Activated CD4-positive, alpha-beta memory T cell treated with anti-CD3 and anti-CD28 coated beads, Interleukin-2, amount 10 ng/mL, durations not matched to agents 7 days and 5 days (primary cell): ENCODE measurements at regions of chr2 and their contacts with region 1.

Region 1: DNA sequence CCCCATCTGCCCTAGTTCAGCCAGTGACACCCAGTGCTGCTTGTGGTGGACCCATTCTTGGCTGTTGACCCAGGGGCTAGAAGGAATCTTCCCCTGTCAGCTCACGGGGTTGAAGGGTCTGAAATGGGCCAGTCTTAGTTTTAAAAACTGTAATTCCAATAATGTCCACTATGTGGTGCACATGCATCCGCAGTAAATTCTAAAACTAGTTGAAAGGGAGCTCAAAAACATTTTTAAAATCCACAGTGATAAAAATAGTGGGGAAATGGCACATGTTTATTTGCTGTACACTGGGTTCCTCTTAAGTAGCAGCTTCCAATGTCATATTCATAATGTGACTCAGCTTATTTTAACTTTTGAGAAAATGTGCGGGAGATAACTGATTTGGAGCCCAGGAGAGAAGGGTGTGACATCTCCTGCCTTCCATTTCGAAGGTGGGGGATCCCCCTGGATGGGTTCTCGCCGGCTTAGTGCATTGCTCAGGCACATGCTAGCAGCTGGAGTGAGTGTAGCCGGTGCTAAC is 32.8 kb downstream of the GRHL1 start:
- DNase-seq: no peak
- H3K4me3 Mint-ChIP-seq: no peak overlapping the region
- H3K27ac Mint-ChIP-seq: no peak overlapping the region
- H3K4me1 Mint-ChIP-seq: peaks cover 16% of the 10 kb centered on the region
- H3K27me3 Mint-ChIP-seq: peaks cover 13% of the 10 kb centered on the region

Region 2: DNA sequence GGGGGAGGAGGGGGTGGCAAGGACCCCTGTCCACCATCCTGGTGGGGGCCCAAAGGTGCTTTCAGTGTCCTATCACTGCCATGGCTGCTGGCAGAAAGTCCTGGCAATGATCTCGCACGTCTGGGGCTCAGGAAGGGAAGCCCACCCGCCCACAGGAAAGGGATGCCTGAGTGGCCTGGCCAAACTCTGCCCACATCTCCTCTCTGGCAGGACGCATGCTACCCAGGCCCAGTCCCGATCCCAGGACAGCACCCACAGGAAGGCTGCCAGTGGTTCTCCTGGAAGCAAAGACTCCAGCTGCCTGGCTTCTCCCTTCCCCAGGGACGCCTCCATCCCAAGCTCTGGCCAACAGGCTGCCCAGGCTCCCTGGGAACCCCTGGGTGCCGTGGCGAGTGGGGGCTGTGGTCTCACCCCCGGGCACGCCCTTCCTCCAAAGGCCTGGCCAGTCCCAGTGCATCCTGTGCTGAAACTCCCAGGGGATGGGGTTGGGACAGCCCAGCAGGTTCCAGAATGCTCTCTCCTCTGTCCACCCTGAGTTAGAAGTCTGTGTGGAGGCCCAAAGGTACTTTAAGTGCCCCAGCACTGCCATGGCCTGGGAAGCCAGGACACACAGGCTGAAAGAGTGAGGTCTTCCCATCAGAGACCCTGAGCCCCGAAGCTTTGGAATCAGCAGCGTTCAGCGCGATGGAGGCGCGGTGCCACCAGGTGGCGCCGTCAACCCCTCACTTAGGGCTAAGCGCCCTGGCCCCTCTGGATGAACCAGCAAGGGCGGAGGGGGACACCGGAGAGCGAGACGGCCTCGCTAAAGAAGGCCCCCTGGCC is 170.8 kb before region 1 on chr2:
- CTCF ChIA-PET with region 1: interaction called, 32 read pairs
- POLR2A ChIA-PET with region 1: no interaction called
- DNase-seq: peak; percentile 79
- H3K4me3 Mint-ChIP-seq: no peak overlapping the region
- H3K27ac Mint-ChIP-seq: no peak overlapping the region
- H3K4me1 Mint-ChIP-seq: peaks cover 35% of the 10 kb centered on the region
- H3K27me3 Mint-ChIP-seq: peaks cover 7% of the 10 kb centered on the region

Region 3: GRCh38 chr2:9949584-9950513 is 34.4 kb before region 1 on chr2:
- CTCF ChIA-PET with region 1: interaction called, 25 read pairs
- POLR2A ChIA-PET with region 1: no interaction called
- DNase-seq: no peak
- H3K4me3 Mint-ChIP-seq: peak overlapping the region; percentile 75
- H3K27ac Mint-ChIP-seq: no peak overlapping the region
- H3K4me1 Mint-ChIP-seq: peaks cover 9% of the 10 kb centered on the region
- H3K27me3 Mint-ChIP-seq: peaks cover 61% of the 10 kb centered on the region

Region 4: DNA sequence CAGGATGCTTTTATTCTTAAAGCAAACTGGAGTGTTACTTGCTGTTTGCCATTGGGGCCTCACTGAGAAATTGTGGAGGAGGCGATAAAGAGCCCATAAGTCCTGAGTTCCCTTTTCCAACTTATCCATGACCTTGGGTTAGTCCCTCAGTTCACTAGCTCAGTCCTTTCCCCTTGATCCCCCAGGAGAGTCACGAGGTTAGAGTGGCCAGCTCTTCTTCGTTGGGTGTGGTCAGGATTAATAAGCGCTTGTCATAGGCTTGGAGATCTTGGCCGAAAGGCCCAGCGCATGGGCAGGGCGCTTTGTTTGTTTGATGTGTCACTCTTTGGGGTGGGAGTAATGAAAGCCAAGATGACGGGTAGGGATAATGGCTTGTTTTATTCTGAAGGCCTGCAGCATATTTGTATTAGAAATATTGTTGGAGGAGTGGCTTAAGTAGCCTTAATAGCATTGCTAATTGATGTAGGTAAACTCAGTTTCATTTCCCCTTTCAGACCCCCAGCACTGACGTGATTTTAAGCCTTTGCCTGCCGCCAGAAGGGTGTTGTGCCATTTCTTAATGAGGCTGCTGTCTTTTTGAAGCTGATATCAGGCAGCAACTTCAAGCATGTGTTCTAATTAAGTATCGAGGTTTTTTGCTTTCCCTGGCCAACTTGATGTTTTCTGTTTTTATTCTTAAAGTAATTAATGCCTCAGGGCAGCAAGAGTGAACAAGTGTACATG is 17.1 kb before region 1 on chr2:
- CTCF ChIA-PET with region 1: interaction called, 28 read pairs
- POLR2A ChIA-PET with region 1: interaction called, 3 read pairs
- DNase-seq: no peak
- H3K4me3 Mint-ChIP-seq: no peak overlapping the region
- H3K27ac Mint-ChIP-seq: no peak overlapping the region
- H3K4me1 Mint-ChIP-seq: peaks cover 36% of the 10 kb centered on the region
- H3K27me3 Mint-ChIP-seq: peaks cover 1% of the 10 kb centered on the region

Region 5: GRCh38 chr2:10028988-10029874 is 45.0 kb after region 1 on chr2:
- CTCF ChIA-PET with region 1: interaction called, 52 read pairs
- POLR2A ChIA-PET with region 1: interaction called, 6 read pairs
- DNase-seq: peak; percentile 77
- H3K4me3 Mint-ChIP-seq: peak overlapping the region; percentile 65
- H3K27ac Mint-ChIP-seq: peak overlapping the region; percentile 79
- H3K4me1 Mint-ChIP-seq: peaks cover 38% of the 10 kb centered on the region
- H3K27me3 Mint-ChIP-seq: no peaks in the 10 kb centered on the region

Region 6: GRCh38 chr2:10043906-10044601 is 59.8 kb after region 1 on chr2:
- CTCF ChIA-PET with region 1: interaction called, 157 read pairs
- POLR2A ChIA-PET with region 1: interaction called, 14 read pairs
- DNase-seq: peak; percentile 95
- H3K4me3 Mint-ChIP-seq: peak overlapping the region; percentile 80
- H3K27ac Mint-ChIP-seq: peak overlapping the region; percentile 81
- H3K4me1 Mint-ChIP-seq: peaks cover 44% of the 10 kb centered on the region
- H3K27me3 Mint-ChIP-seq: peaks cover 26% of the 10 kb centered on the region

Region 7: DNA sequence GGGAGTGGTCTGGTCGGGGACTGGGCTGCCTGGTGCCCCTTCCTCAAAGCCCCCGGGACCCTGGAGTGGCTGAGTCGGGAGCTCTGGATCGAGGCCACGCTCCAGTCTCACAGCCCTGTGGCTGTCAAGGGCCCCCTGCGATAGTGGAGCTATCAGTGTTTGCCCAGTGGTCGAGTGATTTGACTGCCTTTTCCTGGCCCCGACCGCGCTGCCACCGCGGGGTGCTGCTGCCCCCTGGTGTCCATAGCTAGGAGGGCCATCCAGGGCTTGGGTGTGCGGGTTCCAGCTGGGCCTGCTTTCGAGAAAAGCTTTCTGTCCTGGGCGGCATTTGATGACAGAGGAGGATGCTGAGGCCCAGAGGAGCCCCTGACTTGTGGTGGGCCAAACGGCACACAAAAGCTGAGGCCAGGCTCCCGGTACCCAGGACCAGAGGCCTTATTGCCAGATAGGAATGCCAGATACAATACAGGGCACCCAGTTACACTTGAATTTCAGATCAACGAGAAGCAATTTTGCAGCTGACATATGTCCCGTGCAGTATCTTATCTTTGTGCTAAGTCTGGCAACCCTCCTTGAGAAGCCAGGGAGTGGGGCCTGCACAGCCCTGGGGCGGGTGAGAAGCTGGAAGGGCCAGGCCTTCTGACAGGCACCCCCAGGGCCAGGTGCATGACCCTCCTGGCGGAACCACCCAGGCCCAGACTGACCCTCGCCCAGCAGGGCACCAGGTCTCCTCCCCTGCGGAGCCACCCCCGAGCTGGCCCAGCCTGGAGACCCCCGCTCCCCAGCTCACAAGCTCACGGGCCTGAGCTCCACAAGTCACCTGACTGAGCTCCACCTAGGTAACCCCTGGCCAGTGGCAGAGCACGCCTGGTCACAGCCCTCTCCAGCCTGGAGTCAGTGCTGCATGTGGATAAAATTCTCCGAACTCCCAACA is 450.9 kb after region 1 on chr2:
- CTCF ChIA-PET with region 1: interaction called, 15 read pairs
- POLR2A ChIA-PET with region 1: no interaction called
- DNase-seq: peak; percentile 75
- H3K4me3 Mint-ChIP-seq: no peak overlapping the region
- H3K27ac Mint-ChIP-seq: no peak overlapping the region
- H3K4me1 Mint-ChIP-seq: peaks cover 15% of the 10 kb centered on the region
- H3K27me3 Mint-ChIP-seq: peaks cover 12% of the 10 kb centered on the region